Naive thymus-derived CD4-positive, alpha-beta T cell (primary cell): ENCODE measurements at regions of chr1 and their contacts with region 1.

Region 1: GRCh38 chr1:226679853-226680516 is 59.1 kb downstream of the ITPKB start:
- DNase-seq: peak; percentile 42 to 89 (median 75)
- ATAC-seq: peak; percentile 58
- H3K4me3 ChIP-seq: peak overlapping the region; percentile 40
- H3K4me3 Mint-ChIP-seq: peak overlapping the region; percentile 80 to 90 (median 82)
- H3K27ac ChIP-seq: peak overlapping the region; percentile 86
- H3K27ac Mint-ChIP-seq: peak overlapping the region; percentile 95 to 100 (median 99)
- H3K4me1 ChIP-seq: peaks cover 86 to 97% of the 10 kb centered on the region in 2 donors
- H3K4me1 Mint-ChIP-seq: peaks cover 83 to 100% (median 99%) of the 10 kb centered on the region in 7 donors
- H3K27me3 ChIP-seq: no peaks in the 10 kb centered on the region
- H3K27me3 Mint-ChIP-seq: peaks cover 0 to under 1% (median 0%) of the 10 kb centered on the region in 5 donors

Region 2: GRCh38 chr1:226634166-226634588 is 45.8 kb before region 1 on chr1:
- CTCF ChIA-PET with region 1: interaction called, 33 read pairs
- POLR2A ChIA-PET with region 1: interaction called, 7 read pairs
- intact Hi-C with region 1: loop called (anchors 1 to 2 kb)
- DNase-seq: peak; percentile 69 to 86 (median 79)
- ATAC-seq: peak; percentile 89
- H3K4me3 ChIP-seq: no peak overlapping the region
- H3K4me3 Mint-ChIP-seq: peak overlapping the region; percentile 10 to 90 (median 64)
- H3K27ac ChIP-seq: peak overlapping the region; percentile 54
- H3K27ac Mint-ChIP-seq: peak overlapping the region; percentile 76 to 98 (median 90)
- H3K4me1 ChIP-seq: peaks cover 26 to 48% of the 10 kb centered on the region in 2 donors
- H3K4me1 Mint-ChIP-seq: peaks cover 23 to 75% (median 61%) of the 10 kb centered on the region in 7 donors
- H3K27me3 ChIP-seq: no peaks in the 10 kb centered on the region
- H3K27me3 Mint-ChIP-seq: no peaks in the 10 kb centered on the region

Region 3: GRCh38 chr1:226662642-226663326 is 17.2 kb before region 1 on chr1:
- CTCF ChIA-PET with region 1: interaction called, 3 read pairs
- POLR2A ChIA-PET with region 1: interaction called, 276 read pairs
- intact Hi-C with region 1: loop called in 1 of 2 experiments (anchors 1 kb)
- DNase-seq: peak; percentile 47 to 96 (median 76)
- ATAC-seq: peak; percentile 92
- H3K4me3 ChIP-seq: peak overlapping the region; percentile 2
- H3K4me3 Mint-ChIP-seq: peak overlapping the region in 9 of 10 donors; percentile 63 to 81 (median 77)
- H3K27ac ChIP-seq: no peak overlapping the region
- H3K27ac Mint-ChIP-seq: peak overlapping the region in 1 of 9 donors; percentile 91
- H3K4me1 ChIP-seq: peaks cover 0 to 80% of the 10 kb centered on the region in 2 donors
- H3K4me1 Mint-ChIP-seq: peaks cover 0 to 92% (median 0%) of the 10 kb centered on the region in 7 donors
- H3K27me3 ChIP-seq: no peaks in the 10 kb centered on the region
- H3K27me3 Mint-ChIP-seq: no peaks in the 10 kb centered on the region

Region 4: GRCh38 chr1:226711976-226712741 is 32.2 kb after region 1 on chr1:
- CTCF ChIA-PET with region 1: interaction called, 3 read pairs
- POLR2A ChIA-PET with region 1: interaction called, 7 read pairs
- intact Hi-C with region 1: loop called in 1 of 2 experiments (anchors 1 kb)
- DNase-seq: peak in 7 of 9 donors; percentile 52 to 76 (median 61)
- ATAC-seq: peak; percentile 69
- H3K4me3 ChIP-seq: peak overlapping the region; percentile 43
- H3K4me3 Mint-ChIP-seq: peak overlapping the region; percentile 68 to 92 (median 82)
- H3K27ac ChIP-seq: peak overlapping the region; percentile 75
- H3K27ac Mint-ChIP-seq: peak overlapping the region; percentile 79 to 100 (median 95)
- H3K4me1 ChIP-seq: peaks cover 69 to 88% of the 10 kb centered on the region in 2 donors
- H3K4me1 Mint-ChIP-seq: peaks cover 72 to 100% (median 99%) of the 10 kb centered on the region in 7 donors
- H3K27me3 ChIP-seq: no peaks in the 10 kb centered on the region
- H3K27me3 Mint-ChIP-seq: no peaks in the 10 kb centered on the region

Region 5: DNA sequence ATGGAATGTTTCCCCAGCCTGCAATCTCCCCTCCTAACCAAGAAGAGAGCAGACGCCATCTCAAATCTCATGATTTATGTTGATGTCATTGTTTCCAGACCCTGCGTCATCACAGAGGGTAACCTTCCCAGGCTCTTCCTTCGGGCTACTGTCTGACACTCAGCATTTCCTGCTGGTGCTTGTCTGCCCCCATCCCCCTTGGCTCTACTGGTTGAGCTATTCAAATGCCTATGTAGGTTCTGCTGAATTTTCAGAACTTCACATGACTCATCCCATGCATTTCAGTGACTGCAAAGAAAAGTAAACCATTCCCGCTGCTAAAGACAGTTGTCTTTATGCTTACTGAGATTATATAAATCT is 83.9 kb after region 1 on chr1:
- CTCF ChIA-PET with region 1: no interaction called
- POLR2A ChIA-PET with region 1: no interaction called
- intact Hi-C with region 1: no loop called
- DNase-seq: peak in 3 of 9 donors; percentile 15 to 47 (median 17)
- ATAC-seq: peak; percentile 27
- H3K4me3 ChIP-seq: no peak overlapping the region
- H3K4me3 Mint-ChIP-seq: peak overlapping the region in 2 of 10 donors; percentile 9 to 32
- H3K27ac ChIP-seq: no peak overlapping the region
- H3K27ac Mint-ChIP-seq: peak overlapping the region in 2 of 9 donors; percentile 6 to 36
- H3K4me1 ChIP-seq: peaks cover 3 to 19% of the 10 kb centered on the region in 2 donors
- H3K4me1 Mint-ChIP-seq: peaks cover 18 to 32% (median 26%) of the 10 kb centered on the region in 7 donors
- H3K27me3 ChIP-seq: no peaks in the 10 kb centered on the region
- H3K27me3 Mint-ChIP-seq: peaks cover 0 to 18% (median 0%) of the 10 kb centered on the region in 5 donors

Region 6: DNA sequence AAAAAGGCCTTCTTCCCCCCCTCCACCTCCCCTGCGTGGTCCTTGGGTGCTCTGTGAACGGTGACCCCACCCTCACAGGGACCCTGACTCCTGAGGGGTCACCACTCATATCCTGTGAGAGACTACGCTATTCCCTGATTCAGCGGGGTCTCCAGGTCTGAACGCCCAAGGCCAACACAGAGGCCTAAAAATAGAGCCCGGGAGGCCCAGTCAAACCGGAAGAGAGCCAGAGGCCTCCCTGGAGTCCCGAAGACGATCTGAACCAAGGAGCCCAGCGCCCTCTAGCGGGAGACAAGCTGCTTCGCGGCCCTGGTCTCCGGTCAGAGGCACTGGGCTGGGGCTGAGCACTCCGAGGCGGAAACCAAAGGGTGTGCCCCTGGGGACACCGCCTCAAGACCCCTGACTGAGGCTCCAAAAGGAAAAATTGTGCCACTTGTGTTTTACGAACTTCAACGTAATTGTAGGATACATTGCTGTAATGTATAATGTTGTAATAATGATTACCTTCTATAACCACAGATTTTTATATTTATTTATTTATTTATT is 148.1 kb after region 1 on chr1:
- CTCF ChIA-PET with region 1: no interaction called
- POLR2A ChIA-PET with region 1: interaction called, 4 read pairs
- intact Hi-C with region 1: loop called in 1 of 2 experiments (anchors 1 kb)
- DNase-seq: peak; percentile 82 to 94 (median 91)
- ATAC-seq: peak; percentile 99
- H3K4me3 ChIP-seq: peak overlapping the region; percentile 34
- H3K4me3 Mint-ChIP-seq: peak overlapping the region; percentile 35 to 79 (median 66)
- H3K27ac ChIP-seq: peak overlapping the region; percentile 59
- H3K27ac Mint-ChIP-seq: peak overlapping the region; percentile 80 to 95 (median 87)
- H3K4me1 ChIP-seq: peaks cover 9 to 11% of the 10 kb centered on the region in 2 donors
- H3K4me1 Mint-ChIP-seq: peaks cover 24 to 54% (median 45%) of the 10 kb centered on the region in 7 donors
- H3K27me3 ChIP-seq: no peaks in the 10 kb centered on the region
- H3K27me3 Mint-ChIP-seq: peaks cover 0 to 4% (median 0%) of the 10 kb centered on the region in 5 donors